ENCODE measurements at regions of chr2 and their contacts with region 1.

Region 1: DNA sequence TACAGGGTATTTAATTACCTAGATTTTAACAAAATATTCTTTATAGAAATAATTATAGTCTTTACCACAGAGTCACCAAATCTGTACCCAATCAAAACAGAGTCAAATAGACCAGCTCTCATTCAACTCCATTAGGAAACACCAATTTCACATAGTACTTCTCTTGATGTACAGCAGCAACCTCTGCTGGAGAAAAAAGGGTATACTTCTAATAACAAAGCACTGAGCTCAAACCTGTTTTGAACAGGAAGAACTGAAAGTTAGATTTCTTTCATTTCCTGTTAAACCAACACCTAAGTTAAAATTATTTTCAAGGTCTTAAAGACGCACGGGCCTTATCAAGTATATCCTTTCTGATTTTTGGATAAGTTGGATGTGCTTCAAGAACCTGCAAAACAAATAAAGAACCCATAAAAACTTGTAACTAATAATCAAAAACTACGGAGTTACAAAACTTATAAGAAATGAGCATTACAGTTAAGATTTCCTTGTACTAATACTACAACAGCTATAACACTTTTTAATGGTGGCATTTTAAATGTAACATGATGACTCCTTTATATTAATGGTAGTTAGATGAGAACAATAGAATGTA is 79.0 kb downstream of the TTC21B start:
- DNase-seq: peak; percentile 36
- ATAC-seq: peak; percentile 86
- H3K4me3 ChIP-seq: no peak overlapping the region
- H3K27ac ChIP-seq: peak overlapping the region; percentile 12; the same call in 1 of the 2 replicates
- H3K4me1 ChIP-seq: peaks cover 7% of the 10 kb centered on the region; the same call in 1 of the 2 replicates
- H3K27me3 ChIP-seq: no peaks in the 10 kb centered on the region
- CTCF ChIP-seq: peak; percentile 60 to 81 (median 66)
- EP300 ChIP-seq: no peak
- POLR2A ChIP-seq: no peak
- RAD21 ChIP-seq: peak; percentile 91

Region 2: DNA sequence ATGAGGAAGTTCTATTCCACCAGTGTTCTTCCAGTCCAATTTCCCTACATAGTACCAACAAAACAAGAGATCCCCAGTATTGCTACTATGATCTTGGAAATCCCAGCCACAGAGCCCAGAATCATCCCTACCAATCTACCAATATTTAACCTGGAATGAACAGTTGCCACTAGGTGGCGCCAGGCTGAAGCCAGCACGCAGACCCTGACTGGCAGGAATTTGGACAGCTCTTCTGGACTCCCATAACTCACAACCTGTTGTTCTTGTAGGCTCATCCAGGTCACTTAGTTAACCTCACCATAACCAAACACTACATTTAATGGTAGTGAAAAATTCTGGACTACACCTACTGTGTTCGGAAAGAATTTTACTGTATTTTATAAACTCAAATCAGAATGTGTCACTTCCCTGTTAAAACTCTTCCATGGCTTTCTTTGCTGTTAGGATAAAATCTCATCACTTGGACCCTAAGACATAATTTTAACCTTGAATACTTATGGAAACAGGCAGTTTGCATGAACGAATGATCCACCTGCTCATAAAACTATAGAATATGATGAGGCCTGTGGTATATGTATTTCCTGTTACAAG is 859.4 kb before region 1 on chr2:
- CTCF ChIA-PET with region 1: interaction called, 15 read pairs
- POLR2A ChIA-PET with region 1: no interaction called
- RAD21 ChIA-PET with region 1: interaction called, 9 read pairs
- SMC1A ChIA-PET with region 1: interaction called, 8 read pairs
- in situ Hi-C with region 1: no loop called
- intact Hi-C with region 1: no loop called
- DNase-seq: no peak
- ATAC-seq: peak; percentile 95
- H3K4me3 ChIP-seq: no peak overlapping the region
- H3K27ac ChIP-seq: no peak overlapping the region
- H3K4me1 ChIP-seq: no peaks in the 10 kb centered on the region
- H3K27me3 ChIP-seq: no peaks in the 10 kb centered on the region
- CTCF ChIP-seq: peak; percentile 77 to 85 (median 80)
- EP300 ChIP-seq: no peak
- POLR2A ChIP-seq: no peak
- RAD21 ChIP-seq: peak; percentile 65

Region 3: GRCh38 chr2:165401285-165401852 is 473.2 kb before region 1 on chr2:
- CTCF ChIA-PET with region 1: interaction called, 71 read pairs
- POLR2A ChIA-PET with region 1: no interaction called
- RAD21 ChIA-PET with region 1: interaction called, 49 read pairs
- SMC1A ChIA-PET with region 1: interaction called, 68 read pairs
- in situ Hi-C with region 1: loop called (anchors 5 kb)
- intact Hi-C with region 1: loop called (anchors 1 kb)
- DNase-seq: peak; percentile 9
- ATAC-seq: peak; percentile 77
- H3K4me3 ChIP-seq: no peak overlapping the region
- H3K27ac ChIP-seq: no peak overlapping the region
- H3K4me1 ChIP-seq: no peaks in the 10 kb centered on the region
- H3K27me3 ChIP-seq: no peaks in the 10 kb centered on the region
- CTCF ChIP-seq: peak; percentile 54 to 69 (median 66); a peak in 5 of 6 replicates
- EP300 ChIP-seq: no peak
- POLR2A ChIP-seq: no peak
- RAD21 ChIP-seq: peak; percentile 81

Region 4: DNA sequence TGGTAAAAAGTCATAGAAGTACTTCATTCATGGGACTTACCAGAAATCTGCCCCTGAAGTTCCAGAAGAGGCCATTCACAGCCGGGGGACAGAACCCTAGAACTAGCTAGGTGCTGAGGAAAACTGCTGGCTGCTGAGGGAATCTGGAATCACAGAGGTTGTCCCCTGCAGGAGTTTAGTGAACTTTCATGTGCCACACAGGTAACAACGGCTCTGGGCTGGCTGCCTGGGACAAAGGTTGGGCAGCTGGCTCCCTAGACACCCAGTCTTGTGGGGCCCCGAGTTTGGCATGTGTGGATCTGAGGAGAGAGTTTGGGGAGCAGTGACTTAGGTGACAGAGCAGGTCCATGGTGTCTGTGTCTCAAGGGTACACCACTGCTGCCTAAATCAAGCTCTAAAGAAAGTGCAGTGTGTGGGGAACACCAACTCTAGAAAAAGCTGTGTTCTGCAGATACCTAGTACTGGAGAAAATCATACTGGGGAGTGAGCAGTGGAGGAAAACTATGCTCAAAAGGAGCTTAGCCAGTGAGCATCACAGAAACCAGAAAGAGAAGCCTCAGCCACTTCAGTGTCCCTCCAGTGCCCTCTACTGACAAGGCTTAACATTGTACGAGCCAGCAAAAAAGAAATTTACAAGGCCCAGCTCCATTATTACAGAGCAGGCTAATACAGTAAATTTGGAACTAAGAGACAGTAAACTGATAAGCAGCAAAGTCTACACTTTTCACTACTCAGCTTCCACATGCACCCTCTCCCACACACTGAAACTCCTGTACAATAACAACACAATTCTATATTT is 95.7 kb before region 1 on chr2:
- CTCF ChIA-PET with region 1: interaction called, 10 read pairs
- POLR2A ChIA-PET with region 1: no interaction called
- RAD21 ChIA-PET with region 1: interaction called, 10 read pairs
- SMC1A ChIA-PET with region 1: interaction called, 4 read pairs
- in situ Hi-C with region 1: no loop called
- intact Hi-C with region 1: loop called (anchors 5 kb)
- DNase-seq: no peak
- ATAC-seq: peak; percentile 93
- H3K4me3 ChIP-seq: no peak overlapping the region
- H3K27ac ChIP-seq: no peak overlapping the region
- H3K4me1 ChIP-seq: no peaks in the 10 kb centered on the region
- H3K27me3 ChIP-seq: no peaks in the 10 kb centered on the region
- CTCF ChIP-seq: peak; percentile 43 to 50 (median 46); a peak in 5 of 6 replicates
- EP300 ChIP-seq: no peak
- POLR2A ChIP-seq: no peak
- RAD21 ChIP-seq: peak; percentile 50

Region 5: DNA sequence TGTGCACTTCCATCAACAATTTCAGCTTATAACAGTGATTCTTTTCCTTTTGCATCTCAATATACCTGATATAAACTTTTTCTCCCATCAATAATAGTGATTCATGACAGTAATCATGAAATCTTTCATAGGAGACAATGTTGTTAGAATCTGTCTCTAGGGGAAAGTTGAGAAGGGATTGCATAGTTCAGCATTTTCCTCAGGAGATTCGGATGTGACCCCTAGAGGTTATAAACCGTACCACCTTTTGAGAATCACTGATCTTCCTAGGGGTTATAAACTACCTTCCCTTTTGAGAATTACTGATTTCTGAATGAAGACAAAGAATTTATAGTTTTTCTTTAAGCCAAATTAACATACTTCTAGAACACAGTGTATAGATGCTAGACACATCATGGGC is 27.5 kb before region 1 on chr2:
- CTCF ChIA-PET with region 1: interaction called, 19 read pairs
- POLR2A ChIA-PET with region 1: no interaction called
- RAD21 ChIA-PET with region 1: no interaction called
- SMC1A ChIA-PET with region 1: interaction called, 7 read pairs
- in situ Hi-C with region 1: no loop called
- intact Hi-C with region 1: no loop called
- DNase-seq: no peak
- ATAC-seq: peak; percentile 38; the same call in 1 of the 3 replicates
- H3K4me3 ChIP-seq: no peak overlapping the region
- H3K27ac ChIP-seq: no peak overlapping the region
- H3K4me1 ChIP-seq: no peaks in the 10 kb centered on the region
- H3K27me3 ChIP-seq: no peaks in the 10 kb centered on the region
- CTCF ChIP-seq: no peak
- EP300 ChIP-seq: no peak
- POLR2A ChIP-seq: no peak
- RAD21 ChIP-seq: no peak

Region 6: GRCh38 chr2:165889158-165889557 is 14.6 kb after region 1 on chr2:
- CTCF ChIA-PET with region 1: interaction called, 19 read pairs
- POLR2A ChIA-PET with region 1: no interaction called
- RAD21 ChIA-PET with region 1: interaction called, 7 read pairs
- SMC1A ChIA-PET with region 1: interaction called, 12 read pairs
- in situ Hi-C with region 1: no loop called
- intact Hi-C with region 1: no loop called
- DNase-seq: no peak
- ATAC-seq: no peak
- H3K4me3 ChIP-seq: no peak overlapping the region
- H3K27ac ChIP-seq: no peak overlapping the region
- H3K4me1 ChIP-seq: no peaks in the 10 kb centered on the region
- H3K27me3 ChIP-seq: no peaks in the 10 kb centered on the region
- CTCF ChIP-seq: no peak
- EP300 ChIP-seq: no peak
- POLR2A ChIP-seq: no peak
- RAD21 ChIP-seq: no peak

Region 7: DNA sequence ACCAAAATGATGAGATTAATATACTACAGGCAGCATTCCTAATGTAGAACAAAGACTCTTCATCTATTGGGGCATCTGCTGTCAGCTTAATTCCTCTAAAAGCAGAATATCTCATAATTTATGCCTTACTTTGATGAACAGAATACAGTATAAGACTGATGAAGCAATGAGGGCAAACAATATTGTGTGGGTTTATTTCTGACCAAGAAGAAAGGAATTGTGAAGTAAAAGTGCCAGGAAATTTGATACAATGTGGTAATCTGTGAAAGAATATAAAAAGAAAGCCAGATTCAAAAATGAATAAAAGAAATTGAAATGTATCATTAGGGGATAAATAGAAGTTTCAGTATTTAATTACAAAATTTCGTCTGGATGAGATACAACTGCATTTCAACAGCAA is 157.8 kb after region 1 on chr2:
- CTCF ChIA-PET with region 1: no interaction called
- POLR2A ChIA-PET with region 1: no interaction called
- RAD21 ChIA-PET with region 1: no interaction called
- SMC1A ChIA-PET with region 1: no interaction called
- in situ Hi-C with region 1: no loop called
- intact Hi-C with region 1: no loop called
- DNase-seq: no peak
- ATAC-seq: no peak
- H3K4me3 ChIP-seq: no peak overlapping the region
- H3K27ac ChIP-seq: no peak overlapping the region
- H3K4me1 ChIP-seq: no peaks in the 10 kb centered on the region
- H3K27me3 ChIP-seq: no peaks in the 10 kb centered on the region
- CTCF ChIP-seq: no peak
- EP300 ChIP-seq: no peak
- POLR2A ChIP-seq: no peak
- RAD21 ChIP-seq: no peak

Region 8: DNA sequence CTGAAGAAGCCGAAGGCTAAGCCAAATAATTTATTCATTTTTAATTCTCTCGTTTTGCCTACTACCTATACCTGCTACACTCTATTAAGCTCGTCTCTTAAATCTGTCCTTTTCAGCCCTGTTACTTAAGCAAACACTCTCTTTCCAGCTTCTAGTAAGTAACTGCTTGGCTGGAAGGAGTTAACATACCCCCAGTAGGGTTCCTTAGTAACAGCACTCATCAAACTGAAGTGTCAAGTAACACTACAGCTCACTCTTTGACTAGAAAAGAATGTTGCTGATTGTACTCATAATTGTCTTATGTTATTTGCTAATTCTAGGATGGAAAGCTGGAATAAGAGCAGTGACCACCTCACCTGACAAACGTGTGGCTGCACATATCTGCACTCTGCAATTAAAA is 739.5 kb after region 1 on chr2:
- CTCF ChIA-PET with region 1: no interaction called
- POLR2A ChIA-PET with region 1: no interaction called
- RAD21 ChIA-PET with region 1: no interaction called
- SMC1A ChIA-PET with region 1: no interaction called
- in situ Hi-C with region 1: no loop called
- intact Hi-C with region 1: no loop called
- DNase-seq: no peak
- ATAC-seq: no peak
- H3K4me3 ChIP-seq: no peak overlapping the region
- H3K27ac ChIP-seq: no peak overlapping the region
- H3K4me1 ChIP-seq: no peaks in the 10 kb centered on the region
- H3K27me3 ChIP-seq: no peaks in the 10 kb centered on the region; a peak in 1 of 4 replicates
- CTCF ChIP-seq: no peak
- EP300 ChIP-seq: no peak
- POLR2A ChIP-seq: no peak
- RAD21 ChIP-seq: no peak